ENCODE measurements at regions of chr1 and their contacts with region 1.

Region 1: GRCh38 chr1:15835741-15836510 is 11.6 kb upstream of the SPEN start:
- DNase-seq: peak; percentile 96 to 100 (median 99)

Region 2: DNA sequence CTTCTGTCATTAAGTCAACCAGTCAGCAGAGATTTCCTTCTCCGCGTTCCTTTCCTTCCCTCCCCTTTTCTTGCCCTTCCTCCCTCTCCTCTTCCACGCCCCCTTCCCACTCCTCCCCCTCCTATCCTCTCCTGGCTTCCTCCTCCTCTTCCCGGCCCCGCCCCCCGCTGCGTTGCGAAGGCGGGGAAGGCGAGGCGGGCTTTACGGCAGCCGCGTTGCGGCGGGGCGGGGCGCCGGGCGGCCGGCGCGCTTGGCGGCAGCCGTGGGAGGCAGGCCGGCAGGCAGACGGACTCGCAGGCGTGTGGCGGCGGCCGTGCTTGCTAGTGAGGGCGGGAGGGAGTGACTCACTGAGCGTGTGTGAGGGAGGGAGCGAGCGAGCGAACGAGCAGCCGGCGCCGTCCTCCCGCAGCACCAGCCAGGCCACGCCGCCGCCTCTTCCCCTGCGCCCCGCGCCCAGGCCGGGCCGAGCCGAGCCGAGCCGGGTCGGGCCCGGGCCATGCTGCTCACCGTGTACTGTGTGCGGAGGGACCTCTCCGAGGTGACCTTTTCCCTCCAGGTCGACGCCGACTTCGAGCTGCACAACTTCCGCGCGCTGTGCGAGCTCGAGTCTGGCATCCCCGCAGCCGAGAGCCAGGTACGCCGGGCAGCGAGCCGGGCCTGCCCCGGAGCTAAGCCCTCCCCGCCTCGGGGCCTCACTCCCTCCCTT is 218.6 kb before region 1 on chr1 and contains the start of gene DDI2:
- intact Hi-C with region 1: no loop called
- DNase-seq: peak; percentile 83 to 98 (median 94)

Region 3: GRCh38 chr1:15847100-15847892 is 11.4 kb after region 1 on chr1 and contains the start of gene SPEN:
- intact Hi-C with region 1: loop called (anchors 1 kb)
- DNase-seq: peak; percentile 90 to 99 (median 98)

Region 4: DNA sequence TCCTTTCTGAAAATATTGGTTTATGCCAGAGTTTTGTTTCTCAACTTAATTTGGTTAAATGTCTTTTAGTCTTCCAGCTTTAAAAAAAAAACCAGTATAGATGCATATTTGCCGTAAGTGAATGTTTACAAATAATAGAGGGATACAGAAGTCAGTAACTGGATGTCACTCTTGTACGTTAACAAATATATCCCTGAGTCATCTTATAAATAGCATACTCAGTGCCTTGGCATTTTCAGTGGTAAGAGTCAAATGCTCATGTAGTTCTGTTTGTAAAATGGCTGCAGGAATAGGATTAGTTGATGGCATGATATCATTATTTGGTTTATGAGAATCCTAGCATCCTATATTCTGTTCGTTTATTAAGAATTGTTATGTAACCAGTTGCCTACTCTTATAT is 67.0 kb after region 1 on chr1:
- intact Hi-C with region 1: no loop called
- DNase-seq: no peak

Region 5: GRCh38 chr1:15966081-15966955 is 130.4 kb after region 1 on chr1:
- intact Hi-C with region 1: loop called (anchors 5 kb)
- DNase-seq: peak in 21 of 42 donors; percentile 22 to 76 (median 44)